ENCODE measurements at regions of chr12 and their contacts with region 1.

Region 1: GRCh38 chr12:50504798-50505385 is at the start of gene DIP2B:
- DNase-seq: peak; percentile 93 to 98 (median 96)
- ATAC-seq: peak; percentile 90
- H3K4me3 ChIP-seq: peak within 1 kb of the TSS; percentile 88
- H3K4me3 Mint-ChIP-seq: peak within 1 kb of the TSS; percentile 99
- H3K27ac ChIP-seq: peak within 1 kb of the TSS; percentile 11 to 90
- H3K27ac Mint-ChIP-seq: peak within 1 kb of the TSS; percentile 85
- H3K4me1 ChIP-seq: peaks cover 42% of the 10 kb centered on the region
- H3K4me1 Mint-ChIP-seq: peaks cover 51% of the 10 kb centered on the region
- H3K27me3 ChIP-seq: no peaks in the 10 kb centered on the region
- H3K27me3 Mint-ChIP-seq: no peaks in the 10 kb centered on the region
- CTCF ChIP-seq: peak; percentile 92
- total RNA-seq, gene DIP2B: 29.5 to 30.0 TPM

Region 2: GRCh38 chr12:50517456-50518048 is 12.7 kb after region 1 on chr12:
- CTCF ChIA-PET with region 1: interaction called, 13 read pairs
- POLR2A ChIA-PET with region 1: interaction called, 75 read pairs
- intact Hi-C with region 1: loop called in 1 of 2 experiments (anchors 1 kb)
- DNase-seq: peak in 3 of 14 experiments; percentile 48 to 58 (median 56)
- ATAC-seq: peak; percentile 78
- H3K4me3 ChIP-seq: no peak overlapping the region
- H3K4me3 Mint-ChIP-seq: no peak overlapping the region
- H3K27ac ChIP-seq: peak overlapping the region; percentile 44 to 48
- H3K27ac Mint-ChIP-seq: no peak overlapping the region
- H3K4me1 ChIP-seq: peaks cover 77% of the 10 kb centered on the region
- H3K4me1 Mint-ChIP-seq: peaks cover 42% of the 10 kb centered on the region
- H3K27me3 ChIP-seq: no peaks in the 10 kb centered on the region
- H3K27me3 Mint-ChIP-seq: no peaks in the 10 kb centered on the region
- CTCF ChIP-seq: no peak

Region 3: GRCh38 chr12:50533203-50533584 is 28.3 kb after region 1 on chr12:
- CTCF ChIA-PET with region 1: interaction called, 12 read pairs
- POLR2A ChIA-PET with region 1: interaction called, 10 read pairs
- intact Hi-C with region 1: no loop called
- DNase-seq: no peak
- ATAC-seq: peak; percentile 18
- H3K4me3 ChIP-seq: no peak overlapping the region
- H3K4me3 Mint-ChIP-seq: no peak overlapping the region
- H3K27ac ChIP-seq: peak overlapping the region; percentile 52 to 74
- H3K27ac Mint-ChIP-seq: no peak overlapping the region
- H3K4me1 ChIP-seq: peaks cover 44% of the 10 kb centered on the region
- H3K4me1 Mint-ChIP-seq: peaks cover 39% of the 10 kb centered on the region
- H3K27me3 ChIP-seq: no peaks in the 10 kb centered on the region
- H3K27me3 Mint-ChIP-seq: no peaks in the 10 kb centered on the region
- CTCF ChIP-seq: no peak

Region 4: DNA sequence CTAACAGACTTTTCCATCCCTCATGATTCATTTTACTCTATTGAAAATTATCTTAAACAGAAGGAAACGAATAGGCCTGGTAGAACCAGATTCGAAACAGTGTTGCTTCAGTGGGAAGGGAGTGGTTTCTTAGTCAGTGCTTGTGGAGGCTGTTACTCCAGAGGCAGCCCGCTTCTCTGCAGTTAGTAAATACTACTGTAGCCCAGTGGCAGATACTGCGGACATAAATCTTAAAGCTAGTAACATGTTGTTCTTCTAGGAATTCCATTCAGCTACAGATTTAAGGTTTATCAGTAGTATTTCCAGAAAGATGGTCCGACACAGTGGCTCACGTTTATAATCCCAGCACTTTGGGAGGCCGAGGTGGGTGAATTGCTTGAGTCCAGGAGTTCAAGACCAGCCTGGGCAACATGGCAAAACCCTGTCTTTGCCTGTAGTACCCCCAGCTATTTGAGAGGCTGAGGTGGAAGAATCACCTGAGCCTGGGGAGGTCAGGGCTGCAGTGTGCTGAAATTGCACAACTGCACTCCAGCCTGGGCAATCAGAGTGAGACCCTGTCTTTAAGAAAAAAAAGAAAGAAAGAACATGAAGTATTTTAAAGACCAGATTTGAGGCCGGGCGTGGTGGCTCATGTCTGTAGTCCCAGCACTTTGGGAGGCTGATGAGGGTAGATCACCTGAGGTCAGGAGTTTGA is 45.8 kb after region 1 on chr12:
- CTCF ChIA-PET with region 1: interaction called, 6 read pairs
- POLR2A ChIA-PET with region 1: no interaction called
- intact Hi-C with region 1: loop called in 1 of 2 experiments (anchors 5 kb)
- DNase-seq: no peak
- ATAC-seq: no peak
- H3K4me3 ChIP-seq: no peak overlapping the region
- H3K4me3 Mint-ChIP-seq: no peak overlapping the region
- H3K27ac ChIP-seq: no peak overlapping the region
- H3K27ac Mint-ChIP-seq: no peak overlapping the region
- H3K4me1 ChIP-seq: peaks cover 13% of the 10 kb centered on the region
- H3K4me1 Mint-ChIP-seq: peaks cover 58% of the 10 kb centered on the region
- H3K27me3 ChIP-seq: no peaks in the 10 kb centered on the region
- H3K27me3 Mint-ChIP-seq: no peaks in the 10 kb centered on the region
- CTCF ChIP-seq: no peak

Region 5: DNA sequence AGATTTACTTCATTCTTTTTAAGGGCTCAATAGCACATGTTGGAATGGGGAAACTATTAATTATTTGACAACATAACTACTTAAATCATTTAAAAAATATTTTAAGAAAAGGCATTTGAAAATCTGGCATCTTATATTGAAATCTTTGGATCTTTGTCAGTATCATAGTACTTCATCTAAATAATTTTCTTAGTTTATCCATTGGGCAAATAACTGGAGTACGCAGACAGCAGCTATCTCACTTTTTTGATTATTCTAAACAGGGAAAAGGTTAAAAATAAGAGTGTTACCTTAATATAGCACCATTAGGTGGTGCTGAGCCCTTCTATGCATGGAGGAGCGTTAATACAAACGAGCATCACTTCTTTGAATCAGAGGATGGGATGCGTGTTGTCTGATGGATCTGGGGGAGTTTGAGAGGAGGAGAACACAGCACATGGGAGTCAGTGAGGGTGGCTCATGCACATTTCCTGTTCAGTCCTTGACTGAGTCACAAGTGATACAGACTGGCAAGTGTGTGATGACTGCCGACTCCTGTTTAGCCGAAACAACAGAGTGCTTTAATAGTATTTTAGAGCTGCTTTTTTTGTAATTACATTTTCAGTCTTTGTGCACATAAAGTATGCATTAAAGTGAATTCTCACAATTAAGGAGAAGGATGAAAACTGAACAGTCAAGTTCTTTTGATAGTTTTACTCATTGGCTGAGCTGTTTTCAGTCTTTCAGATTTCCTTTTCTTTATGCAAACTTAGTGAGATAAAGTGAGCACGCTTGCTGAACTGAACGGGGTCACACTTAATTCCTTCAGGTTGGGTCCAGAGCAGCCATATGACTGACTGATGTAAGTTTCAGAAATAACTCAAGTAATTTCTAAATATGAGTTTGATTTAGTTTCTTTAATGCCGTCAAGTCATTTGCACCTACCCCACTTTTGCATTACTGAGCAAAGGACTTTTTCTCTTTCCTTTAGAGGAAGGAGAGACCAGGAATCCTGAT is 92.6 kb after region 1 on chr12:
- CTCF ChIA-PET with region 1: interaction called, 11 read pairs
- POLR2A ChIA-PET with region 1: interaction called, 5 read pairs
- intact Hi-C with region 1: no loop called
- DNase-seq: peak in 13 of 14 experiments; percentile 16 to 70 (median 32)
- ATAC-seq: peak; percentile 98
- H3K4me3 ChIP-seq: no peak overlapping the region
- H3K4me3 Mint-ChIP-seq: peak overlapping the region; percentile 12
- H3K27ac ChIP-seq: no peak overlapping the region
- H3K27ac Mint-ChIP-seq: peak overlapping the region; percentile 28
- H3K4me1 ChIP-seq: peaks cover 7% of the 10 kb centered on the region
- H3K4me1 Mint-ChIP-seq: peaks cover 57% of the 10 kb centered on the region
- H3K27me3 ChIP-seq: no peaks in the 10 kb centered on the region
- H3K27me3 Mint-ChIP-seq: no peaks in the 10 kb centered on the region
- CTCF ChIP-seq: no peak

Region 6: GRCh38 chr12:50637870-50638481 is 133.1 kb after region 1 on chr12:
- CTCF ChIA-PET with region 1: interaction called, 57 read pairs
- POLR2A ChIA-PET with region 1: interaction called, 24 read pairs
- intact Hi-C with region 1: loop called (anchors 1 kb)
- DNase-seq: peak in 3 of 14 experiments; percentile 65 to 66 (median 65)
- ATAC-seq: peak; percentile 82
- H3K4me3 ChIP-seq: no peak overlapping the region
- H3K4me3 Mint-ChIP-seq: no peak overlapping the region
- H3K27ac ChIP-seq: peak overlapping the region in 1 of 2 donors; percentile 14
- H3K27ac Mint-ChIP-seq: peak overlapping the region; percentile 34
- H3K4me1 ChIP-seq: no peaks in the 10 kb centered on the region
- H3K4me1 Mint-ChIP-seq: peaks cover 43% of the 10 kb centered on the region
- H3K27me3 ChIP-seq: no peaks in the 10 kb centered on the region
- H3K27me3 Mint-ChIP-seq: no peaks in the 10 kb centered on the region
- CTCF ChIP-seq: peak; percentile 70

Region 7: GRCh38 chr12:50734409-50735263 is 229.7 kb after region 1 on chr12:
- CTCF ChIA-PET with region 1: no interaction called
- POLR2A ChIA-PET with region 1: no interaction called
- intact Hi-C with region 1: loop called in 1 of 2 experiments (anchors 1 kb)
- DNase-seq: peak in 3 of 14 experiments; percentile 34 to 45 (median 40)
- ATAC-seq: peak; percentile 43
- H3K4me3 ChIP-seq: no peak overlapping the region
- H3K4me3 Mint-ChIP-seq: no peak overlapping the region
- H3K27ac ChIP-seq: no peak overlapping the region
- H3K27ac Mint-ChIP-seq: no peak overlapping the region
- H3K4me1 ChIP-seq: no peaks in the 10 kb centered on the region
- H3K4me1 Mint-ChIP-seq: no peaks in the 10 kb centered on the region
- H3K27me3 ChIP-seq: no peaks in the 10 kb centered on the region
- H3K27me3 Mint-ChIP-seq: no peaks in the 10 kb centered on the region
- CTCF ChIP-seq: peak; percentile 34

Measured in CD4-positive, alpha-beta T cell (primary cell).